ENCODE measurements at regions of chr19 and their contacts with region 1.

Region 1: DNA sequence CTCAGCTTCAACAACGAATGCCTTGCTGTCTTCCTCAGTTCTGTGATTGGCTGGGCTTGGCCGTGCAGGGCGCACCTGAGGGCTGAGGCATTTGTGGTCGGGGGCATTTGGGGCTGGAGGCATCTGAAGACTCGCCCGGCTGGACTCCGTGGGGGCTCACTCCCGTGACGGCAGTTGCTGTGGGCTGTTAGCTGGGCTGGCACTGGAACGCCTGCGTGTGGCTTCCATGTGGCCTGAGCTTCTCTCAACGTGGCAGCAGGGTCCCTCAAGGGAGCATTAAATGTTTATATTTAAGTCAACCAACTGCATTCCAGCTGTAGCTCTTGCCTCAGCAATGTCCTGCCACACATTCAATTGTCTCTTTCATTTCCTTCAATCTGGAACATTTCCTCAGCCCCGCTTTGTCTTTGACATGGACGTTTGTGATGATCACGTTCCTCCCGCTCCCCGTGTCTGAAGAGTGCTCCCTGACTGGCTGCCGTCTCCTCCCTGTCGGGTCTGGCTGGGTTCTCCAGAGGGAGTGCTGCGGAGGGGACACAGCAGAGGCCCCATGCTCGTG is 21.0 kb downstream of the CCDC8 start:
- DNase-seq: no peak
- ATAC-seq: no peak
- H3K4me3 ChIP-seq: no peak overlapping the region
- H3K27ac ChIP-seq: no peak overlapping the region
- H3K4me1 ChIP-seq: no peaks in the 10 kb centered on the region
- H3K27me3 ChIP-seq: no peaks in the 10 kb centered on the region
- CTCF ChIP-seq: no peak
- EP300 ChIP-seq: no peak
- POLR2A ChIP-seq: no peak
- RAD21 ChIP-seq: no peak

Region 2: GRCh38 chr19:46288896-46289588 is 103.3 kb before region 1 on chr19:
- CTCF ChIA-PET with region 1: no interaction called
- POLR2A ChIA-PET with region 1: no interaction called
- in situ Hi-C with region 1: loop called (anchors 10 kb)
- intact Hi-C with region 1: no loop called
- DNase-seq: peak; percentile 36
- ATAC-seq: no peak; the same call in 2 of the 3 replicates
- H3K4me3 ChIP-seq: no peak overlapping the region
- H3K27ac ChIP-seq: no peak overlapping the region
- H3K4me1 ChIP-seq: peaks cover 9% of the 10 kb centered on the region; the same call in 1 of the 2 replicates
- H3K27me3 ChIP-seq: no peaks in the 10 kb centered on the region; a peak in 1 of 5 replicates
- CTCF ChIP-seq: no peak
- EP300 ChIP-seq: no peak
- POLR2A ChIP-seq: no peak
- RAD21 ChIP-seq: no peak

Region 3: DNA sequence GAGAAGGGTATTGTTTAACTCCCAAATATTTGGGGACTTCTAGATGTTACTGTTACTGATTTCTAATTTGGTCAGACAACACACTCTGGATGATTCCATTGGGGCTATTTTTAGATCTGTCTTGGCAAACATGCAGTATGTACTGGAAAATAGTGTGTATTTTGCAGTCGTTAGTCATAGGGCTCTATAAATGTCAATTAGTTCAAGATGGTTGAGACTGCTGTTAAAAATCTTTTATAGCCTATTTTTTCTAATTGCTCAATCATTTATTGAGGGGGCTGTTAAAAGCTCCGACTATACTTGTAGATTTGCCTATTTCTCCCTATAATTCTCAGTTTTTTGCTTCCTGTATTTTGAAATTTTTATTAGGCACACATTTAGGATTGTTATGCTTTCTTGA is 14.1 kb before region 1 on chr19:
- CTCF ChIA-PET with region 1: no interaction called
- POLR2A ChIA-PET with region 1: no interaction called
- in situ Hi-C with region 1: no loop called
- intact Hi-C with region 1: no loop called
- DNase-seq: no peak
- ATAC-seq: no peak
- H3K4me3 ChIP-seq: no peak overlapping the region
- H3K27ac ChIP-seq: no peak overlapping the region
- H3K4me1 ChIP-seq: no peaks in the 10 kb centered on the region
- H3K27me3 ChIP-seq: no peaks in the 10 kb centered on the region
- CTCF ChIP-seq: no peak
- EP300 ChIP-seq: no peak
- POLR2A ChIP-seq: no peak
- RAD21 ChIP-seq: no peak

Region 4: GRCh38 chr19:46404055-46404752 is 11.9 kb after region 1 on chr19:
- CTCF ChIA-PET with region 1: interaction called, 13 read pairs
- POLR2A ChIA-PET with region 1: interaction called, 3 read pairs
- in situ Hi-C with region 1: no loop called
- intact Hi-C with region 1: no loop called
- DNase-seq: peak; percentile 69
- ATAC-seq: peak; percentile 80
- H3K4me3 ChIP-seq: peak overlapping the region; percentile 62 to 85 (median 76)
- H3K27ac ChIP-seq: peak overlapping the region; percentile 86
- H3K4me1 ChIP-seq: peaks cover 38% of the 10 kb centered on the region
- H3K27me3 ChIP-seq: no peaks in the 10 kb centered on the region
- CTCF ChIP-seq: peak; percentile 74
- EP300 ChIP-seq: no peak
- POLR2A ChIP-seq: peak in 1 of 2 experiments; percentile 48; a peak in 1 of 4 replicates
- RAD21 ChIP-seq: peak; percentile 20; the same call in 1 of the 2 replicates

Region 5: GRCh38 chr19:46431824-46432223 is 39.5 kb after region 1 on chr19:
- CTCF ChIA-PET with region 1: interaction called, 12 read pairs
- POLR2A ChIA-PET with region 1: no interaction called
- in situ Hi-C with region 1: no loop called
- intact Hi-C with region 1: loop called (anchors 5 kb)
- DNase-seq: no peak
- ATAC-seq: peak; percentile 76
- H3K4me3 ChIP-seq: no peak overlapping the region; a peak in 1 of 6 replicates
- H3K27ac ChIP-seq: no peak overlapping the region
- H3K4me1 ChIP-seq: peaks cover 15% of the 10 kb centered on the region; the same call in 1 of the 2 replicates
- H3K27me3 ChIP-seq: peaks cover 0 to 16% of the 10 kb centered on the region in 2 experiments; a peak in 3 of 5 replicates
- CTCF ChIP-seq: peak; percentile 68
- EP300 ChIP-seq: no peak
- POLR2A ChIP-seq: no peak
- RAD21 ChIP-seq: peak; percentile 65

Region 6: DNA sequence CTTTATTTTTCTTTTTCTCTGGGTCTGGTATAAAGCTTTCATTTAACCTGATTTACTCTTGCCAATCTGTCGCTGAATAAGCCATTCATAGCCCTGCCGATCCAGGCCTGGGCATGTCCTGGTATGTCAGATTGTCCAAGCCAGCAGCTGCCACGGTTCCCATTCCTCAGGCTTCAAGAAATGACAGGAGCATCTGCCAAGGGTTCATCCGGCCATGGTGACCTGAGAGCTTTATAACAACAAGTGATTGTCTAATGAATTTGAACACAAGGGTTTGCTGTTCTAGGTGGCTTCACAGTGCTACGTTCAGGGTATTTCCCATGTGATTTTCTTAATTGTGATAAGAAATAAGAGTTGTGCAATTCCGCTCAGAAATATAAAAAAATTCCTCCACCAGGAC is 59.0 kb after region 1 on chr19:
- CTCF ChIA-PET with region 1: no interaction called
- POLR2A ChIA-PET with region 1: no interaction called
- in situ Hi-C with region 1: no loop called
- intact Hi-C with region 1: no loop called
- DNase-seq: no peak
- ATAC-seq: no peak
- H3K4me3 ChIP-seq: no peak overlapping the region
- H3K27ac ChIP-seq: no peak overlapping the region
- H3K4me1 ChIP-seq: no peaks in the 10 kb centered on the region
- H3K27me3 ChIP-seq: no peaks in the 10 kb centered on the region
- CTCF ChIP-seq: no peak
- EP300 ChIP-seq: no peak
- POLR2A ChIP-seq: no peak
- RAD21 ChIP-seq: no peak

Region 7: GRCh38 chr19:46487802-46488445 is 95.6 kb after region 1 on chr19:
- CTCF ChIA-PET with region 1: interaction called, 96 read pairs
- POLR2A ChIA-PET with region 1: no interaction called
- in situ Hi-C with region 1: no loop called
- intact Hi-C with region 1: loop called (anchors 2 kb)
- DNase-seq: peak; percentile 46
- ATAC-seq: peak; percentile 85
- H3K4me3 ChIP-seq: peak overlapping the region in 1 of 3 experiments; percentile 72; a peak in 3 of 6 replicates
- H3K27ac ChIP-seq: no peak overlapping the region
- H3K4me1 ChIP-seq: peaks cover 15% of the 10 kb centered on the region; the same call in 1 of the 2 replicates
- H3K27me3 ChIP-seq: peaks cover 3 to 35% of the 10 kb centered on the region in 2 experiments; a peak in 4 of 5 replicates
- CTCF ChIP-seq: peak; percentile 98
- EP300 ChIP-seq: no peak
- POLR2A ChIP-seq: no peak
- RAD21 ChIP-seq: peak; percentile 96

Region 8: GRCh38 chr19:46513461-46514236 is 121.3 kb after region 1 on chr19:
- CTCF ChIA-PET with region 1: interaction called, 59 read pairs
- POLR2A ChIA-PET with region 1: no interaction called
- in situ Hi-C with region 1: no loop called
- intact Hi-C with region 1: no loop called
- DNase-seq: peak; percentile 44
- ATAC-seq: peak; percentile 91
- H3K4me3 ChIP-seq: no peak overlapping the region
- H3K27ac ChIP-seq: no peak overlapping the region
- H3K4me1 ChIP-seq: no peaks in the 10 kb centered on the region
- H3K27me3 ChIP-seq: no peaks in the 10 kb centered on the region
- CTCF ChIP-seq: peak; percentile 97
- EP300 ChIP-seq: no peak
- POLR2A ChIP-seq: no peak
- RAD21 ChIP-seq: peak; percentile 91